ENCODE measurements at regions of chr1 and their contacts with region 1.

Region 1: GRCh38 chr1:205977402-205978014 is 25.7 kb downstream of the RAB7B start:
- DNase-seq: peak; percentile 82 to 91 (median 86)
- H3K4me3 ChIP-seq: no peak overlapping the region
- H3K27ac ChIP-seq: no peak overlapping the region
- H3K4me1 ChIP-seq: peaks cover 0 to 6% (median 4%) of the 10 kb centered on the region in 4 experiments
- H3K27me3 ChIP-seq: no peaks in the 10 kb centered on the region

Region 2: DNA sequence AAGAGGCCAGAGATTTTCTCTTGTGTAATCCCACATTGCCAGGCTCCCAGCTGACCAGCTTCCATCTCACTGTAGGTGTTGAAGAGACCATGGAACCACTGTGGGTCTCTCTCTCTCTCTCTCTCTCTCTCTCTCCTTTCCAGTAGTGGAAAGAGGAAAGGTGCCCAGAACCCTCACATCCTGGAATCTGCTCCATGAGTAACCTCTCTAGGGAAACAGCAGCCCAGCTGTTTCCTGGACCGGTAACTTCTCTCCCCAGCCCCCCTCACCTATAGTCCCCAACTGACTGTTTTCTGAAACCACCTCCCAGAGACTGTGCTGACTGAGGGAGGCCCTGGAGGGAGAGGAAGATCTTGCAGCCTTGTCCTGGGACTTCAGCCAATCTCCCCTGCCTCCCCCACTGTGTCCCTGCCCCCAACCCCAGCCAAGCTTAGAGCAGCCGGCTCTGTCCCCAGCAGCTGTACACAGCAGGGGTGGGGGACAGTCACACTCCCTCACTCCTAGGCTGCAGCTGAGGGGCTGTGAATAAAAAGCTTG is 276.6 kb before region 1 on chr1:
- CTCF ChIA-PET with region 1: no interaction called
- POLR2A ChIA-PET with region 1: no interaction called
- DNase-seq: peak in 2 of 3 donors; percentile 76 to 84
- H3K4me3 ChIP-seq: peak overlapping the region in 3 of 7 experiments; percentile 32 to 60 (median 37)
- H3K27ac ChIP-seq: peak overlapping the region in 1 of 2 experiments; percentile 51
- H3K4me1 ChIP-seq: peaks cover 27 to 80% (median 72%) of the 10 kb centered on the region in 4 experiments
- H3K27me3 ChIP-seq: no peaks in the 10 kb centered on the region

Region 3: GRCh38 chr1:205791568-205792180 is 185.8 kb before region 1 on chr1:
- CTCF ChIA-PET with region 1: interaction called, 173 read pairs
- POLR2A ChIA-PET with region 1: no interaction called
- DNase-seq: peak; percentile 50 to 75 (median 66)
- H3K4me3 ChIP-seq: no peak overlapping the region
- H3K27ac ChIP-seq: no peak overlapping the region
- H3K4me1 ChIP-seq: no peaks in the 10 kb centered on the region
- H3K27me3 ChIP-seq: no peaks in the 10 kb centered on the region

Region 4: DNA sequence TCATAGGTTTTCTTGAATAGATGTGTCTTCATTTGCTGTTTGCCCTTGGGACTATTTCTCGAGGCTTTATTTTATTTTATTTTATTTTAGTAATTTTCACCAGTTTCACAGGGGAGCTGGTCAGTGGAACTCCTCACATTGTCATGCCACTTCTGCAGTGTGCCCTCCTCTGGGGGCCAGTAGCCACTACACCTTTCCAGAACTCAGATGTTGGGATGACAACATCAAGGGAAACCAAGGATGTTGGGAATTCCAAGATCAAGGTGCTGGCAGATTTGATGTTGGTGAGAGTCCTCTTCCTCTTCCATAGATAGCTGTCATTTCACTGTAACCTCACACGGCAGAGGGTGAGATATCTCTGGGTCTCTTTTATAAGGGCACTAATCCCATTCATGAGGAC is 69.7 kb before region 1 on chr1:
- CTCF ChIA-PET with region 1: interaction called, 247 read pairs
- POLR2A ChIA-PET with region 1: no interaction called
- DNase-seq: no peak
- H3K4me3 ChIP-seq: no peak overlapping the region
- H3K27ac ChIP-seq: no peak overlapping the region
- H3K4me1 ChIP-seq: no peaks in the 10 kb centered on the region
- H3K27me3 ChIP-seq: peaks cover 0 to 8% (median 0%) of the 10 kb centered on the region in 5 experiments

Region 5: DNA sequence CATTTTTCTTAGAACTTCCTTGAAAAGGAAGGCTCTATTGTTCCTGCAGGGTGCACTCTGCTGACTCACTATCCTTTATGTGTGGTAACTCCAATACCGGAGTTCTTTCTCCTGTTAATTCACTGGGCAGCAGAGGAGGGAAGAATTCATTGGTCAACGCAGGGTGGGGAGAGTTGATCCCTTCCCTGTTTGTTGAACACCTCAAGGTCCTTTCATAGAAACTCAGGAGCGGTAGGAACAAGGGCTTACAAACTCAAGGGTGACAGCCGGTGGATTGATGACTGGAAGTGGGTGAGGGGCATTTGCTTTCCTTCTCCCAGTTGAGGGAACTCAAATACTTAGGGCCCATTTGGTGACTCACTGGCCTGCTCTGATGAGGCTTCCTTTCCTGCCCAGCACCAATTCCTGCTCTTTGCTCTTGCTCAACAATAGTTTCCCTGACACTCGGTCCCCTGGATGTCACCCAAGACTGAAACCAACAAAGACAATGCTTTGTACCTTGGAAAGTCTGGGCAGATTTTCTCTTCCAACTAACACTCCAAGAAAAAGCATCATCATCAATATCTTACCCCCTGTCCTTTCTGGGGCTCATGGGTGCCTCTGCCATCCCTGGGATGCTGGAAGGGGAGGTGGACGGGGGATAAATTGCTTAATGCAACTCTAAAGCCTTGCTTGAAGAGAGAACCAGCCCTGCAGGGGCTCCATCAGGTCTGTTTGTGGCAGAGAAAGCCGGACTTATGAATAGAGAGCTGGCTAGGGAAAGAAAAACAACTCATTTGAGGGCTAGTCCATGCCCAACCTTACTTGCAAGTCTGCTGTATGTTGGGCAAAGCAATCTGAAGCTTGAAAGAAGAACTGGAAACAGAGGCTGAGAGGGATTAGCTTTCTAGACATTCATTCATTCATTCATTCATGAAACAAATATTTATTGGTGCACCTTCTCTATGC is 43.6 kb before region 1 on chr1:
- CTCF ChIA-PET with region 1: interaction called, 15 read pairs
- POLR2A ChIA-PET with region 1: no interaction called
- DNase-seq: peak in 2 of 3 donors; percentile 13
- H3K4me3 ChIP-seq: no peak overlapping the region
- H3K27ac ChIP-seq: no peak overlapping the region
- H3K4me1 ChIP-seq: peaks cover 0 to 7% (median 2%) of the 10 kb centered on the region in 4 experiments
- H3K27me3 ChIP-seq: peaks cover 0 to 15% (median 3%) of the 10 kb centered on the region in 5 experiments

Region 6: DNA sequence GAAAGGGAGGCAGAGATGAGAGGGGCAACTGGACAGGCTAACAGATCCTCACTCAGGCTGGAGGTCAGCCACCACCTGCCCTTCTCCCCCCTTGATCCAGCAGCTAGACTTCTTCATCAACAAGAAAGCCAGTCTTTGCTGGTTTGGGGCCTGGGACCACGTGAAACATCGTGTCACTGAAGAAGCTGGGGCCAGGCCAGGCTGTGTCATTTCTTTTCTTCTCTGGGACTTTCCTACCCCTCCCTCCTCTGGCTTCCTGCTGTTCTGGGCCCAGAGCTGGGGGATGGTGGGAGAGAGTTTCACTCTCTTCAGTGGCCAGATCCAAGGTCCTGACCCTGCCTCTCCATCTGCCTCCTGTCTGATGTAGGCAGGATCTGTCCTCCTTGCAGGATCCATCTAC is 16.1 kb before region 1 on chr1:
- CTCF ChIA-PET with region 1: interaction called, 24 read pairs
- POLR2A ChIA-PET with region 1: no interaction called
- DNase-seq: peak; percentile 14 to 76 (median 73)
- H3K4me3 ChIP-seq: no peak overlapping the region
- H3K27ac ChIP-seq: no peak overlapping the region
- H3K4me1 ChIP-seq: peaks cover 0 to 21% (median 7%) of the 10 kb centered on the region in 4 experiments
- H3K27me3 ChIP-seq: peaks cover 0 to 2% (median 0%) of the 10 kb centered on the region in 5 experiments

Region 7: DNA sequence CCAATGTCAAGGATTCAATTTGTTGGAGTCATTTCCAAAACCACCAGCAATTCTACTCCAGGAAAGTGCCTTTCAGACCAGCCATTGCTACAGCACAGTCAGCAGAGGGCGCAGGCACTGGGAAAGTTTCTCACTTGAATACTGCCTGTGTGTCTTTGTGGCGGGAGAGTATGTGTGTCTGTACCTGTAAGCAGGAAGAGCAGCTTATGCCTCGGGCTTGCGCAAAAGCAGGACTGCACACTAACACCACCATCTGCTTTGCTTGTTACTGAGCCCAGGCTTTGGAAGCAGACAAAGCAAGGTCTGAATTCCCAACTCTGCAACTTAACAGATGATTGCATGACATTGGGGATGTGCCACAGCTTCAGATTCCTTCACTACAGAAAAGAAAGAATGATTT is 53.2 kb after region 1 on chr1:
- CTCF ChIA-PET with region 1: interaction called, 49 read pairs
- POLR2A ChIA-PET with region 1: no interaction called
- DNase-seq: peak; percentile 81 to 85 (median 85)
- H3K4me3 ChIP-seq: peak overlapping the region in 1 of 7 experiments; percentile 35
- H3K27ac ChIP-seq: no peak overlapping the region
- H3K4me1 ChIP-seq: peaks cover 9 to 46% (median 33%) of the 10 kb centered on the region in 4 experiments
- H3K27me3 ChIP-seq: no peaks in the 10 kb centered on the region